AG04450 (cell line): ENCODE measurements at regions of chr7 and their contacts with region 1.

Region 1: GRCh38 chr7:22110227-22110839 is 164.6 kb upstream of the CDCA7L start:
- DNase-seq: peak; percentile 70
- H3K4me3 ChIP-seq: no peak overlapping the region
- H3K27ac ChIP-seq: no peak overlapping the region
- H3K27me3 ChIP-seq: no peaks in the 10 kb centered on the region
- CTCF ChIP-seq: peak; percentile 86

Region 2: GRCh38 chr7:21923658-21924057 is 186.7 kb before region 1 on chr7:
- CTCF ChIA-PET with region 1: no interaction called
- POLR2A ChIA-PET with region 1: no interaction called
- DNase-seq: no peak
- H3K4me3 ChIP-seq: no peak overlapping the region
- H3K27ac ChIP-seq: no peak overlapping the region
- H3K27me3 ChIP-seq: no peaks in the 10 kb centered on the region
- CTCF ChIP-seq: no peak

Region 3: DNA sequence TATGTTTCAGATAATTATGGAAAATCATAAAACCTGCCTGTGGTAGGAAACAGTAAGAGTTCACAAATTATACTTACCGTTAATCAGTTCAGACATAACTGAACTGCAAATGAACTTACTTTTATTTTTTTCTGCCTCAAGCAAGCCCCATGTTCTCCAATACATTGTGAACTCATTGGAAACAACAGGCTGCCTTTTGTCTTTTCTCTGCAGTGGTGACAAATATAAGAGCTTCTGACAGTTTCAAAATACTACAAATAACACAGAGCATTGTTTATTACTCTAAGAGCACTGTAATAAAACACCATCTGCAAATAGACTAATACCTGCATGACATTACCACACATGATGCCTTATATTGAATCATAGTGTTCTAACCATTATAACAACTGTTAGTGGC is 70.7 kb before region 1 on chr7:
- CTCF ChIA-PET with region 1: no interaction called
- POLR2A ChIA-PET with region 1: no interaction called
- DNase-seq: no peak
- H3K4me3 ChIP-seq: no peak overlapping the region
- H3K27ac ChIP-seq: no peak overlapping the region
- H3K27me3 ChIP-seq: no peaks in the 10 kb centered on the region
- CTCF ChIP-seq: no peak

Region 4: DNA sequence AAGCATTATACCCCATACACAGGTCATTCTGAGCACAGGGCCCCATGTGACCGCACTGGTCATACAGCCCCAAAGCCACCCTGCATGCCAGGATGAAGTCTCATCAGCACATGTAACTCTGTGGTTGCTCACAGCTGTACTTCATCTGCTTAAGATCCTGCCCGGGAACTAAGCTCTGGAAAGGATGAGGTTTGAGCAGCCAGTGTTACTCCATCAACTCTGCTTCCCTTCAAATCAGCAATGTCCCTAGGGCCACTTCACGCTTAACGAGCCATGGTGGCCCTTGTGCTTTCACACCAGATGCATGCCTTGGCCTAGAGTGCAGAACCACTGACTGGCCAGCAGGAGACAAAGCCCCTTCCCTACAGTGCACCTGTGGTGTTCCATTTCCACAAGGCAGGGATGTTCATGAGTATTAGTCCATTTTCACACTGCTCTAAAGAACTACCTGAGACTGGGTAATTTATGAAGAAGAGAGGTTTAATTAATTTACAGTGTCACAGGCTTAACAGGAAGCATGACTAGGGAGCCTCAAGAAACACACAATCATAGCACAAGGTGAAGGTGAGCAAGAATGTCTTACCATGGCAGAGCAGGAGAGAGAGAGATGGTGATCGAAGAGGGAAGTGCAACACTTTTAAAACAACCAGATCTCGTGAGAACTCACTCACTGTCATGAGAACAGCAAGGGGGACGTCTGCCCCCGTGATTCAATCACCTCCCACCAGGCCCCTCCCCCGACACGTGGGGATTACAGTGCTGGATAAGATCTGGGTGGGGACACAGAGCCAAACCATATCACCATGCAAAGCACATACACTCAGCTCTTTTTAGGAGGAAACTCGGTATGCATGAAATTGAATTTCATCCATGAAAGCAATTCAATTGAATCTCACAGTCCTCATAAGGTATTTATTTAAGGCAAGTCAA is 15.7 kb before region 1 on chr7:
- CTCF ChIA-PET with region 1: interaction called, 31 read pairs
- POLR2A ChIA-PET with region 1: no interaction called
- DNase-seq: peak; percentile 11
- H3K4me3 ChIP-seq: no peak overlapping the region
- H3K27ac ChIP-seq: no peak overlapping the region
- H3K27me3 ChIP-seq: peaks cover 15% of the 10 kb centered on the region
- CTCF ChIP-seq: 0 out of 2 replicates have a peak, but pooled peaks have one; percentile 15

Region 5: GRCh38 chr7:22127835-22128527 is 17.6 kb after region 1 on chr7:
- CTCF ChIA-PET with region 1: interaction called, 27 read pairs
- POLR2A ChIA-PET with region 1: no interaction called
- DNase-seq: no peak
- H3K4me3 ChIP-seq: no peak overlapping the region
- H3K27ac ChIP-seq: no peak overlapping the region
- H3K27me3 ChIP-seq: peaks cover 5% of the 10 kb centered on the region
- CTCF ChIP-seq: no peak

Region 6: GRCh38 chr7:22255834-22256233 is 145.5 kb after region 1 on chr7:
- CTCF ChIA-PET with region 1: interaction called, 37 read pairs
- POLR2A ChIA-PET with region 1: no interaction called
- DNase-seq: no peak
- H3K4me3 ChIP-seq: no peak overlapping the region
- H3K27ac ChIP-seq: no peak overlapping the region
- H3K27me3 ChIP-seq: no peaks in the 10 kb centered on the region
- CTCF ChIP-seq: no peak

Region 7: GRCh38 chr7:22469371-22470143 is 359.2 kb after region 1 on chr7:
- CTCF ChIA-PET with region 1: interaction called, 11 read pairs
- POLR2A ChIA-PET with region 1: no interaction called
- DNase-seq: no peak
- H3K4me3 ChIP-seq: no peak overlapping the region
- H3K27ac ChIP-seq: no peak overlapping the region
- H3K27me3 ChIP-seq: no peaks in the 10 kb centered on the region
- CTCF ChIP-seq: no peak

Region 8: DNA sequence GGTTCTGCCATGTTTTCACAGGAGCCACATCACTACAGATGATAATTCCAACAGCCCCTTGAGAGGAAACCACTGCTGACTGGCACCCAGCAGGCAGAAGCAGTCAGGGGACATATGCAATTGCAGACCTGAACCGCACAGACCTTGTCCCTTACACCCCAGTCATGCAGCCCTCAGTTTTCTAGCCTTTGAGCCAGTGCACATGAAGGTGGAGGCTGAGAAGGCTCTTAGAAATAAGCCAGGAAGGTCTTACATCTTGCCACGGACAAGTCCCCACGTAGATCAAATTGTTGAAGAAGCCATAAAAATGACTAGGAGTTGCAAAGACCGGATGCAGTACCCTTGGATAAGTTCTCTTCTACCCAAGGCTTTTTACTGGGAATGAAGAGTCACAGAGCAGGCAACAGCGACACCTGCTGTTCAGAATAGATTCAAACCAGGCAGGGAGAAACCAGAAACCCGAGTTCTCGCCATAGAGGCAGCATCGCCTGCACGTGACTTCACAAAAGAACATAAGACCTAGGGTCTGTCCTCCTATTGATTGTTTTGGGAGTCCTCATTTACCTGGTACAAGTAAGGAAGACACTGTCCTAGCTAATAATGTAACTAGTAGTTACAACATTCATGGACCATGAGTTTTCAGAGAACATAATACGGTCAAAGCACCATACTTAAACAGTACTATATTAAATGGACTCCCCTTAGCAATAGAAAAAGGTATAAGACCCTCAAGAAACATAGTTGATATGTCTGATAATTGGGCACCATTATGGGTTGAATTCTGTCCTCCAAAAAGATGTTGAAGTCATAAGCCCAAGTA is 378.5 kb after region 1 on chr7:
- CTCF ChIA-PET with region 1: interaction called, 86 read pairs
- POLR2A ChIA-PET with region 1: no interaction called
- DNase-seq: peak; percentile 45
- H3K4me3 ChIP-seq: no peak overlapping the region
- H3K27ac ChIP-seq: no peak overlapping the region
- H3K27me3 ChIP-seq: no peaks in the 10 kb centered on the region
- CTCF ChIP-seq: peak; percentile 95